Activated CD4-positive, alpha-beta memory T cell treated with anti-CD3 and anti-CD28 coated beads, Interleukin-2, amount 10 ng/mL, durations not matched to agents 7 days and 5 days (primary cell): ENCODE measurements at regions of chr13 and their contacts with region 1.

Region 1: DNA sequence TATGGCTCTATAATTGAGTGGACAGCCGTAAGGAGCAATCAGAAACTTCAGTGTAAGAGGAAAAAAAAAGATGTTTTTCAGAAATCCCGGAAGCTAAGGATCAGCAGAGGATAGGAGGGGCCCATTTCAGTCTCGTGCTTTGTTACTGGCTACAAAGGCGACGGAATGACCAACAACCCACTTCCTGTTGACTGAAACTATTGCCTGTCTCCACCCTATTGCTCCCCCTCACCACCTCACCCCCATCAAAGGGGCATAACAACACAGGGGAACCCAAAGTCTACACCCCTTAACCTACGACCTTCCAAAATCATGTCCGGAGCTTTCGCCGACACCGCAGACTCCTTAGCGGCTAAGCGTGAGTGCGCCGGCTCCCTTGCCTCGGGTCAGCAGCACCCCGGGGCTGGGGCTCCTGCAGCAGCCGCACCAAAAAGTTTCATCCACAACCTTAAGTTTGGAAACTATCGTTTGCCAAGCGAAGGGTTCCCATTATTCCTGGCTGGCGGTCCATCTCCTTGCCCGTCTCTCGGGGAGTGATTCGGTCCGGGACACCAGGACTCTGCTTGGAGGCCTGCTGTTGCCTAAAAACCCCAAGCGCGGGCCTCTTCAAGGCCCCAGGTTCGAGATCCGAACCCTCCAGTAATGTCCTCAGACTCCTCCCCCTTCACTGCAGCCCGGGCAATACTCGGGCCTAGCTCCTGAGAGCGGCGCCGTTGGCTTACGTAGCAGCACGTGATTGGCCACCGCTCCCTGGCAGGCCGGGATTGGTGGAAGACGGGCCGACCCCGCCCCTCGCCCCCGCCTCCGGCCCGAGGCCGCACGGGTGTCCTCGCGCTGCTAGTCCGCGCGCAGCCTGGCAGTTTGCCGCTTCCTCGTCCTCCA is at the start of gene TPP2:
- DNase-seq: peak; percentile 99
- H3K4me3 Mint-ChIP-seq: peak within 1 kb of the TSS; percentile 97
- H3K27ac Mint-ChIP-seq: peak within 1 kb of the TSS; percentile 100
- H3K4me1 Mint-ChIP-seq: peaks cover 64% of the 10 kb centered on the region
- H3K27me3 Mint-ChIP-seq: no peaks in the 10 kb centered on the region
- total RNA-seq, gene TPP2: 86.2 to 96.8 TPM

Region 2: DNA sequence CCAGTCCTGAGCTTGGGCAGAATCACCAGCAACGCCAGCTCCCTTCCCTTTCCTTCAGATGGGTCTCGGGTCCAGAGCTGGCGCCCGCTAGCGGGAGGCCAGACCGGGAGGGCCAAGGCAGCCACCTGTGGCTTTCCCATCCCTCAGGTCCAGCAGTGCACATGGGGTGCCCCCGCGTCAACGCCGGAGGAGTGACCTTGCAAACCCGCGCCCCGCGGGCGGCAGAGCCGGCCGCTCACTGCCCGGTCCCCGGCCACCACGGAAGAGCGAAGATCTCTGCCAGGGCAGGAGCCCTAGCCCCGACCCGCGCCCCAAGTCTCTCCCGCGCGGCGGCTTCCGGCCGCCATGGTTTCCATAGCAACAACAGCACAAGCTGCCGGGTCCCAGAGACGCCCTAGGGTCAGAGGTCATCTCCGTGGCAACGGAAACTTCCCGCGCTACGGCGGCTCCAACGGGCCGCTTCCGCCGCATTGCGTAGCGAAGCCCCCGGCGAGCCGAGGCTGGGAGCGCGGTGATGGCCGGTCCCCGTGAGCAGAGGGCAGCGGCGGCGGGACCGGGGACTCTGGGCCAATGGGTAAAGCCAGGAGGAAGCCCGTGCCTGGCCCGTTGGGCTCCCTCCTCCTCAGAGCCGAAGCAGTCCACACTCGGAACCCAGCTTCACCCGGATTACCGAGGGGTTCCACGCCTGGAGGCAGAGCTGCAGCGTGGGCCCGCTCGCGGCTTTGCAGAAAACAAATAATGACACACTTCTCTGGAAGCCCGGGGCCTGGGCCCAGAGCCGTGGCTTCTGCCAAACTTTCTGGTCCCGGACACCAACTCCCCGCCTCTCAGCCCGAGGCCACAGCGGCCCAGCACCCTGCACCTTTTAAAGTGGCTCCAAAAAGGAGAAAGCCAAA is 202.0 kb before region 1 on chr13:
- CTCF ChIA-PET with region 1: no interaction called
- POLR2A ChIA-PET with region 1: interaction called, 18 read pairs
- DNase-seq: peak; percentile 96
- H3K4me3 Mint-ChIP-seq: peak overlapping the region; percentile 82
- H3K27ac Mint-ChIP-seq: peak overlapping the region; percentile 74
- H3K4me1 Mint-ChIP-seq: peaks cover 24% of the 10 kb centered on the region
- H3K27me3 Mint-ChIP-seq: peaks cover 20% of the 10 kb centered on the region

Region 3: GRCh38 chr13:102609696-102610095 is 13.3 kb after region 1 on chr13:
- CTCF ChIA-PET with region 1: interaction called, 11 read pairs
- POLR2A ChIA-PET with region 1: interaction called, 82 read pairs
- DNase-seq: peak; percentile 25
- H3K4me3 Mint-ChIP-seq: no peak overlapping the region
- H3K27ac Mint-ChIP-seq: peak overlapping the region; percentile 41
- H3K4me1 Mint-ChIP-seq: peaks cover 46% of the 10 kb centered on the region
- H3K27me3 Mint-ChIP-seq: no peaks in the 10 kb centered on the region

Region 4: GRCh38 chr13:102715447-102715846 is 119.1 kb after region 1 on chr13:
- CTCF ChIA-PET with region 1: no interaction called
- POLR2A ChIA-PET with region 1: no interaction called
- DNase-seq: no peak
- H3K4me3 Mint-ChIP-seq: no peak overlapping the region
- H3K27ac Mint-ChIP-seq: no peak overlapping the region
- H3K4me1 Mint-ChIP-seq: no peaks in the 10 kb centered on the region
- H3K27me3 Mint-ChIP-seq: peaks cover 6% of the 10 kb centered on the region

Region 5: GRCh38 chr13:102773441-102774215 is 177.2 kb after region 1 on chr13 and contains the start of gene TEX30:
- CTCF ChIA-PET with region 1: interaction called, 16 read pairs
- POLR2A ChIA-PET with region 1: interaction called, 83 read pairs
- DNase-seq: peak; percentile 90
- H3K4me3 Mint-ChIP-seq: peak within 1 kb of the TSS; percentile 85
- H3K27ac Mint-ChIP-seq: peak within 1 kb of the TSS; percentile 89
- H3K4me1 Mint-ChIP-seq: peaks cover 61% of the 10 kb centered on the region
- H3K27me3 Mint-ChIP-seq: no peaks in the 10 kb centered on the region
- total RNA-seq, gene TEX30: 35.0 to 36.6 TPM

Region 6: DNA sequence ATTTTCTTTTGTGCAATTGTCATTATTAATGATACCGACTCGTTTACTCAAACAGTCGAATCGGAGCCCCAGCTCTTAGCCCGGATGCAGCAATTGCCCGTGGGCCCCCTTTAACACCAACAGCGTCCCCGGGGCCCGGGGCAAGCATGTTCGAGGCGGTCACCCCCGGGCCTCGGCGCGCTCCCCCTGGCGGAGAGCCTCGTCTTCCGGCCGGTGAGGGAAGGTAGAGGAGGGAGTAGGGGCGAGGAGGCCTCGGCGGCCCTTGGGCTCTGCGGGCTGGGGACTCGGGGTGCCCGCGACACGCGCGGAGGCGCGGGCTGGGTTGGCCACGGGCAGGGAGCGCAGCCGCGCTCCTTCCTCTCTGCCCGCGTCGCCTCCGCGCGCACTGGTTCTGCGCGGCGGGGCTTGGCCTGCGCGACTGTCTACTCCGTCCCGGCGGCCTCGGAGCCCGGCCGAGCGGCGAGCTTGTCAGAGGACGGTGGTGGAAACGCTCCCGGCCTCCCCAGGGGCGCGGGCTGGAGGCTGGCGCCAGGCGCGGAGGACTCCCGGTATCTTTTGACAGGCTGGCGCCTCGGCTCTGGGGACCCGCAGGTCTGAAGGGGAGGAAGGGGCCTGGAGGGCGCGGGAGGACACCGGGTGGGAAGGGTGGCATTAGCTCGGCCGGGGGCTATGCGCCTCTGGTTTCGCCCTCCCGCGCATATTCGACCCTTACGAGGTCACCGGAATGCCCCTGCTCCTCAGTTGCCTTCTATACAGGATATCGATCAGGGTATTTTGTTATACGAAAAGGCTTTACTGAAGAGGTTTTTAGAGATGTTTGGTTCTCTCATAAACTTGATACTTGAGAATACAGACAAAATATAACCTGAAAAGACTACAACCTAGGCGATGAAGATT is 204.0 kb after region 1 on chr13:
- CTCF ChIA-PET with region 1: interaction called, 19 read pairs
- POLR2A ChIA-PET with region 1: interaction called, 41 read pairs
- DNase-seq: peak; percentile 89
- H3K4me3 Mint-ChIP-seq: peak overlapping the region; percentile 90
- H3K27ac Mint-ChIP-seq: peak overlapping the region; percentile 74
- H3K4me1 Mint-ChIP-seq: peaks cover 47% of the 10 kb centered on the region
- H3K27me3 Mint-ChIP-seq: no peaks in the 10 kb centered on the region